GM12878 (cell line): ENCODE measurements at regions of chr9 and their contacts with region 1.

Region 1: DNA sequence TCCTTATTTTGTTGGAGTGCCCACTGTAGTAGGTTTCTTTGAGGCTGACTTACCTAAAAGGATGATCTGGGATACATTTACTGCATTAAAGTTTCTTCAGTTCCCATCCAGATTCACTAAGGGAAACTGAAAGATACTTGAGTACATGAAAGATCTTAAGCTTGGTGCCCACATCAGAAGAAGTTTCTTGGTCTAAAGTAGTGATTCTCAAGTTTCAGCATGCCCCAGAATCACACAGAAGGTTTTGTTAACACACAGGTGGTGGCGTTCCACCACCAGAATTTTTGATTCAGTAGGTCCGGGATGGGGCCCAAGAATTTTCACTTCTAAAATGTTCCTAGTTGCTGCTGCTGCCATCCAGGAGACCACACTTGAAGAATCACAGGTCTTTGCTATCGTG is 171.0 kb downstream of the ZNF462 start:
- DNase-seq: peak; percentile 50
- ATAC-seq: peak; percentile 67
- H3K4me3 ChIP-seq: no peak overlapping the region
- H3K27ac ChIP-seq: no peak overlapping the region
- H3K4me1 ChIP-seq: no peaks in the 10 kb centered on the region
- H3K27me3 ChIP-seq: no peaks in the 10 kb centered on the region
- CTCF ChIP-seq: no peak
- EP300 ChIP-seq: no peak
- POLR2A ChIP-seq: no peak
- RAD21 ChIP-seq: no peak

Region 2: DNA sequence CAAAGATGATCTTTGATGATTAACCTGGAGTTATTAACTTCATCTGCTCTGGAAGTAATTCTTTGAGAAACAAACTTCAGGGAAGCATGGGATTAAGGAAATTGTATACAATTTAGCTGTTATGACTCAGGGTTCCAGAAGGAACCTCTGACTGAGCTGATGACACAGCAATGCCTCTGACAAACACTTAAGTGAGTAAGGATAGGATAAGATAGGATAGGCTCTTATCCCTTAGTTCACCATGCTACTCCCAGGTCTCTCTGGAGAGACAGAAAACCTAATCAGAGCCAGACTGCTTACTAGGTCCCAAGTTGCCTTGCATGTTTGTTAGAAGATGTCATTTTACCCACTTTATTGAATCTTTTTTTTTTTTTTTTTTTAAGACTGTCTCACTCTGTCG is 1352.2 kb before region 1 on chr9:
- CTCF ChIA-PET with region 1: no interaction called
- POLR2A ChIA-PET with region 1: no interaction called
- RAD21 ChIA-PET with region 1: no interaction called
- SMC1A ChIA-PET with region 1: no interaction called
- in situ Hi-C with region 1: no loop called
- intact Hi-C with region 1: no loop called
- DNase-seq: no peak
- ATAC-seq: no peak
- H3K4me3 ChIP-seq: no peak overlapping the region
- H3K27ac ChIP-seq: no peak overlapping the region
- H3K4me1 ChIP-seq: no peaks in the 10 kb centered on the region
- H3K27me3 ChIP-seq: no peaks in the 10 kb centered on the region
- CTCF ChIP-seq: no peak
- EP300 ChIP-seq: no peak
- POLR2A ChIP-seq: no peak
- RAD21 ChIP-seq: no peak

Region 3: GRCh38 chr9:107044872-107045271 is 10.9 kb after region 1 on chr9:
- CTCF ChIA-PET with region 1: interaction called, 15 read pairs
- POLR2A ChIA-PET with region 1: interaction called, 6 read pairs
- RAD21 ChIA-PET with region 1: interaction called, 4 read pairs
- SMC1A ChIA-PET with region 1: interaction called, 5 read pairs
- in situ Hi-C with region 1: no loop called
- intact Hi-C with region 1: no loop called
- DNase-seq: no peak
- ATAC-seq: peak; percentile 8; the same call in 1 of the 3 replicates
- H3K4me3 ChIP-seq: no peak overlapping the region
- H3K27ac ChIP-seq: no peak overlapping the region
- H3K4me1 ChIP-seq: peaks cover 15% of the 10 kb centered on the region
- H3K27me3 ChIP-seq: no peaks in the 10 kb centered on the region
- CTCF ChIP-seq: peak; percentile 4 to 27 (median 8); a peak in 1 of 6 replicates
- EP300 ChIP-seq: no peak
- POLR2A ChIP-seq: no peak
- RAD21 ChIP-seq: no peak